K562 (cell line): ENCODE measurements at regions of chr1 and their contacts with region 1.

Region 1: GRCh38 chr1:182084487-182085316 is 23.2 kb upstream of the ZNF648 start:
- DNase-seq: peak; percentile 84 to 88 (median 88)
- ATAC-seq: peak; percentile 95
- H3K4me3 ChIP-seq: no peak overlapping the region
- H3K27ac ChIP-seq: no peak overlapping the region
- H3K4me1 ChIP-seq: peaks cover 10 to 20% of the 10 kb centered on the region in 2 experiments; a peak in 4 of 5 replicates
- H3K27me3 ChIP-seq: peaks cover 15 to 27% of the 10 kb centered on the region in 2 experiments; a peak in 4 of 5 replicates
- CTCF ChIP-seq: peak; percentile 90 to 97 (median 95)
- EP300 ChIP-seq: no peak
- POLR2A ChIP-seq: no peak
- RAD21 ChIP-seq: peak; percentile 98 to 99

Region 2: DNA sequence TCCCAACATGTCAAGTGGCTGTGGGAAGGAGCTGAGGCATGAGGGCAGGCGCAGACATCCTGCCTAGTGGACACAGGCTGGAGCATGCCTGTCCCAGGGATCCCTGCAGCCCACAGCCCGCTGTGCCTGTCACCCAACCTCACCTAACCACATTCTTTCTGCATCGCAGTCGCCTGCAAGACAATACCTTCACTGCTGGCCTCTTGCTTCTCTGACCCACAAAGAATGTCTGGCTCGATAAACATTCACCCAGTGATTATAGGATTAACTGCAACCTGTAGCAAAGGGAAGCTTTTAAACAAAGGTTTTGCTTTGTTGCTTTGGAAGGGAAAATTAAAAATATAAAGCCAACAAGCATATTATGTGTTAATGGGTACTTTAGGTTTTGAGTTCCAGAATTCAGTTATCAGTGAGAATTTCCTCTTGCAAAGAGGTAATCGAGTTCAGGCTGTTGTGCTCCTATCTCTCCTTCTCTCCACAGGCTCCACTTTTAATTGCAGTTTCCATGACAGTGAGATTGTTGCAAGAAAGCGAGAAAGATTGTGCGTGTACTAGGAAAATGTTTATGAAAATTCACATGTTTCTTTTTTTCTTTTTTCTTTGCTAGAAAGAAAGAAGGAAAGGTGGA is 16.8 kb after region 1 on chr1:
- CTCF ChIA-PET with region 1: no interaction called
- POLR2A ChIA-PET with region 1: interaction called, 10 read pairs
- in situ Hi-C with region 1: no loop called
- intact Hi-C with region 1: no loop called
- DNase-seq: no peak
- ATAC-seq: no peak
- H3K4me3 ChIP-seq: no peak overlapping the region
- H3K27ac ChIP-seq: no peak overlapping the region
- H3K4me1 ChIP-seq: no peaks in the 10 kb centered on the region
- H3K27me3 ChIP-seq: peaks cover 5 to 17% of the 10 kb centered on the region in 2 experiments; a peak in 3 of 5 replicates
- CTCF ChIP-seq: no peak
- EP300 ChIP-seq: no peak
- POLR2A ChIP-seq: no peak
- RAD21 ChIP-seq: no peak

Region 3: GRCh38 chr1:182301467-182302198 is 216.9 kb after region 1 on chr1:
- CTCF ChIA-PET with region 1: no interaction called
- POLR2A ChIA-PET with region 1: no interaction called
- in situ Hi-C with region 1: no loop called
- intact Hi-C with region 1: loop called (anchors 2 kb)
- DNase-seq: peak; percentile 53 to 87 (median 62)
- ATAC-seq: peak; percentile 76
- H3K4me3 ChIP-seq: no peak overlapping the region
- H3K27ac ChIP-seq: peak overlapping the region; percentile 95
- H3K4me1 ChIP-seq: peaks cover 37 to 61% of the 10 kb centered on the region in 2 experiments
- H3K27me3 ChIP-seq: no peaks in the 10 kb centered on the region
- CTCF ChIP-seq: peak; percentile 62 to 85 (median 65)
- EP300 ChIP-seq: peak; percentile 69
- POLR2A ChIP-seq: no peak
- RAD21 ChIP-seq: peak; percentile 93 to 98

Region 4: DNA sequence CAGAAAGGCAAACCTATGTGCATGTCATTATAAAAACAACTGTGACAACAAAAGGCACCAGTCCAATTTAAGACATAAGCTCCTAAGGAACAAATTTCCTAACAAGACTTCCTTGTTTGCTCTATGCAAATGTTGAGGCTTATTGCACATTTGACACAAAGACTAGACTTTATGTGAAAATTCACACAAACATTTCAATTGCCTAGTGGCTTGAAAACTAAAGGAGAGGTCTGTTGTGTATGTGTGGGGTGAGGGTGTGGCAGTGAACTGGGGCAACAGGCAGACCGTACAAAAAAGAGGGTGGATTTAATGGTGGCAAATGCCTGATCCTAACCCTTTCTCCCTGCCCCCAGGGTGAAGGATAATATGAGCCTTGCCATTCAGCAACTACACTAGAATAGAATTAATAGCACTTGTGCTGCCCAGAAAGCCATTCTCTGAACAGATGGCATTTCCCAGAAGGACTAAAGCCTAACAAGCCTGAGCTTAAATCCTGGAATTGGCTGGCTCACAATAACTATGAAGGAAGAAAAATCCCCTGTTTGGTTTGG is 233.0 kb after region 1 on chr1:
- CTCF ChIA-PET with region 1: no interaction called
- POLR2A ChIA-PET with region 1: no interaction called
- in situ Hi-C with region 1: no loop called
- intact Hi-C with region 1: no loop called
- DNase-seq: no peak
- ATAC-seq: no peak
- H3K4me3 ChIP-seq: no peak overlapping the region
- H3K27ac ChIP-seq: no peak overlapping the region
- H3K4me1 ChIP-seq: peaks cover 13 to 21% of the 10 kb centered on the region in 2 experiments
- H3K27me3 ChIP-seq: no peaks in the 10 kb centered on the region
- CTCF ChIP-seq: no peak
- EP300 ChIP-seq: no peak
- POLR2A ChIP-seq: no peak
- RAD21 ChIP-seq: no peak

Region 5: DNA sequence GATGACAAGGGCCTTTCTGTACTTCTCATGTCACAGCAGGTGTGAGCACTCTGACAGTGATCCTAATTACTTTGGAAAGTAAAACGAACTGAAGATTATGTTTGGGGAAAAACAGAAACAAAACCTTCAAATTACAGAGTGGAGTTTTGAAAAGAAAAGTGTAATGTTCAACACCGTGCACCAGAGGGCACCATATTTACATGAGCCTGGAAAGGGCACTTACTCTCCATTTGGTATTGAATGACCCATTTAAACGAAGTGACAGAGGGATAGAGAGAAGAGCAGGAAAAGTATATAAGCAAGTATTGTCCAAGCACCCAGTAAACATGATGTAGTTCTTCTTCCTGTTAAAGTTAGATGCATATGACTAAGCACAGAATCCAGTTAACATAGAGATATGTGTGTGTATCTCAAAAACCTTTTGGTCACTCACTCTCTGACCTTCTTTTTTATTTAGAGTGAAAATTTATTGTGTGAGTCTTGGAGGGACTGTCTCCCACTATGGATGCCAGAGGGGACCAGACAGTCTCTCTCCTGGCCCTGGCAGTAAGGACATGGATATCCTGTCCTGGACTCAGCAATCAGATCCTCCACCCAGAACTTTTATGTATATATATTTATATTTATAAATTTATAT is 361.4 kb after region 1 on chr1:
- CTCF ChIA-PET with region 1: interaction called, 5 read pairs
- POLR2A ChIA-PET with region 1: no interaction called
- in situ Hi-C with region 1: no loop called
- intact Hi-C with region 1: loop called (anchors 1 kb)
- DNase-seq: peak; percentile 63 to 77 (median 69)
- ATAC-seq: peak; percentile 89
- H3K4me3 ChIP-seq: no peak overlapping the region
- H3K27ac ChIP-seq: no peak overlapping the region
- H3K4me1 ChIP-seq: no peaks in the 10 kb centered on the region; a peak in 1 of 5 replicates
- H3K27me3 ChIP-seq: peaks cover 0 to 6% of the 10 kb centered on the region in 2 experiments; a peak in 3 of 5 replicates
- CTCF ChIP-seq: peak; percentile 74 to 89 (median 81)
- EP300 ChIP-seq: no peak
- POLR2A ChIP-seq: no peak
- RAD21 ChIP-seq: peak; percentile 90 to 98

Region 6: GRCh38 chr1:182781841-182782586 is 697.3 kb after region 1 on chr1:
- CTCF ChIA-PET with region 1: interaction called, 37 read pairs
- POLR2A ChIA-PET with region 1: interaction called, 3 read pairs
- in situ Hi-C with region 1: loop called (anchors 10 kb)
- intact Hi-C with region 1: loop called (anchors 1 kb)
- DNase-seq: peak; percentile 59 to 84 (median 70)
- ATAC-seq: peak; percentile 86
- H3K4me3 ChIP-seq: no peak overlapping the region
- H3K27ac ChIP-seq: no peak overlapping the region
- H3K4me1 ChIP-seq: peaks cover 0 to 20% of the 10 kb centered on the region in 2 experiments; a peak in 2 of 5 replicates
- H3K27me3 ChIP-seq: peaks cover 0 to 2% of the 10 kb centered on the region in 2 experiments; a peak in 3 of 5 replicates
- CTCF ChIP-seq: peak; percentile 87 to 93 (median 91)
- EP300 ChIP-seq: no peak
- POLR2A ChIP-seq: no peak
- RAD21 ChIP-seq: peak; percentile 93 to 97

Region 7: DNA sequence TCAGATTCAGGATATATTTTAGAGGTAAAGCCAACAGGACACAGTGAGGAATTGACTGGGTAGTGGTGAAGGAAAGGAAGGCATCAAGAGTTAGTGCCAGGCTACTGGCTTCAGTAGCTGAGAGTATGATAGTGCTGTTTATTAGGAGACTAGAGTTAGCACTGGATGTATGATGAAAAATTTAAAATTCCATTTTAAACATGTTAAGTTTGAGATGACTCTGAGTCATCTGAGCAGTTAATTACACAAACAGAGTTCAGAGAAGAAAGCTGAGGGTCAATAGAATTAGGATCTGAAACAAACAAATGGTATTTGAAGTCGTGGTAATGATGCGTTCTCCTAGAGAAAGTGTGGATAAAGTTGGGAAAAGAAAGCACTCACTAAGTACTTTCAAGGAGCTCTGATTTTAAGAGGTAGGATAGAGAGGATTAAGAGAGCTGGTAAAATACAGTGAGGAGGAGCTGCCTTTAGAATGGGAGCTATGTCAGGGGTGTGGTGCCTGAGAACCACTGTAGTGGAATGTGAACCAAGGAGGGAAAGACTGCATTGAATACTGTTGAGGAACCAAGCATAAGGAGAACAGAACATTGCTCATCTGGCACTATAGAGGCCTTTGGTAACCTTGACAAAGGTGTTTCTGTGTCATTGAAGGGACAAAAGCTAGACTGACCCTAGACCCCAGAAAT is 889.9 kb after region 1 on chr1:
- CTCF ChIA-PET with region 1: no interaction called
- POLR2A ChIA-PET with region 1: no interaction called
- in situ Hi-C with region 1: no loop called
- intact Hi-C with region 1: no loop called
- DNase-seq: no peak
- ATAC-seq: no peak
- H3K4me3 ChIP-seq: no peak overlapping the region
- H3K27ac ChIP-seq: no peak overlapping the region
- H3K4me1 ChIP-seq: no peaks in the 10 kb centered on the region
- H3K27me3 ChIP-seq: peaks cover 17 to 19% of the 10 kb centered on the region in 2 experiments
- CTCF ChIP-seq: no peak
- EP300 ChIP-seq: no peak
- POLR2A ChIP-seq: no peak
- RAD21 ChIP-seq: no peak